Activated naive CD4-positive, alpha-beta T cell treated with anti-CD3 and anti-CD28 coated beads for 36 hours (primary cell): ENCODE measurements at regions of chr15 and their contacts with region 1.

Region 1: GRCh38 chr15:72473614-72474465 is at the start of gene ARIH1:
- DNase-seq: peak; percentile 94
- H3K4me3 Mint-ChIP-seq: peak within 1 kb of the TSS; percentile 98
- H3K27ac Mint-ChIP-seq: peak within 1 kb of the TSS; percentile 98
- H3K4me1 Mint-ChIP-seq: peaks cover 34% of the 10 kb centered on the region
- H3K27me3 Mint-ChIP-seq: no peaks in the 10 kb centered on the region
- total RNA-seq, gene ARIH1: 174 to 183 TPM

Region 2: GRCh38 chr15:72117486-72118399 is 356.1 kb before region 1 on chr15 and contains the start of gene MYO9A:
- CTCF ChIA-PET with region 1: no interaction called
- intact Hi-C with region 1: loop called (anchors 1 kb)
- DNase-seq: peak; percentile 99
- H3K4me3 Mint-ChIP-seq: peak within 1 kb of the TSS; percentile 95
- H3K27ac Mint-ChIP-seq: peak within 1 kb of the TSS; percentile 97
- H3K4me1 Mint-ChIP-seq: peaks cover 31% of the 10 kb centered on the region
- H3K27me3 Mint-ChIP-seq: no peaks in the 10 kb centered on the region
- total RNA-seq, gene MYO9A: 9.5 to 10.0 TPM

Region 3: DNA sequence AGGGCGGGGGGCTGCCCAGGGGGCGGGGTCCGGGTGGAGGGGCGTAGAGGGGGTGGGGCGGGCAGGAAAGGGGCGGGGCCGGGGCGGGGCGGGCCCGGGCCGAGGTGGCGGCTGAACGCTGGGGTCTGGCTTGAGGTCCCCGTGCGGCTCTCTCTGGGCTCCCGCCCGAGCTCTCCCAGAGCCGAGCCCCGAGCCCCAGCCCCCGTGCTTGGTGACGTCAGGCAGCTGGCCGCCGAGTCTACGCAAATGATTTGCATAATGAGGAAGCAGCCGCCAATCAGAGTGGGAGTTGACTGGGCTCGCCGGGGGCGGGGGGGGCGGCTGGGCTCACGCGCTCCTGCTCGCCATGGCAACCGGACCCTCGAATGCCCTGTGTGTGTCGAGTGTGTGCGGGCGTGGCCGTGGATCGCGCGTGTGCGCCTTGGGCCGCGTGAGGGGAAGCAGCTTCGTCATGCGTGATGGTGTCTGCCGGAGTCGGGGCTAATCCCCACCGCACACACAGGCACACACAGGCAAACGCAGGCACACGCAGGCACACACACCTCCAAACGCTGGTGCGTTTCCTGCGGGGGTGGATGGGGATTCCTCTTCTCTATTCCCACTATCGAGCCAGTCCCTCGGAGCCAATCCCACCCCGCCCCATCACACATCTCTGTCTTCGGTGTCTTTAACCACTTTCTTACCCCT is 153.7 kb before region 1 on chr15 and contains the start of gene CELF6:
- CTCF ChIA-PET with region 1: no interaction called
- intact Hi-C with region 1: loop called (anchors 5 kb)
- DNase-seq: peak; percentile 75
- H3K4me3 Mint-ChIP-seq: peak within 1 kb of the TSS; percentile 78
- H3K27ac Mint-ChIP-seq: no peak within 1 kb of the TSS
- H3K4me1 Mint-ChIP-seq: peaks cover 19% of the 10 kb centered on the region
- H3K27me3 Mint-ChIP-seq: peaks cover 8% of the 10 kb centered on the region
- total RNA-seq, gene CELF6: 0.22 TPM in 1 of 2 experiments, not detected in the other

Region 4: GRCh38 chr15:72411544-72411943 is 62.3 kb before region 1 on chr15:
- CTCF ChIA-PET with region 1: no interaction called
- intact Hi-C with region 1: no loop called
- DNase-seq: no peak
- H3K4me3 Mint-ChIP-seq: no peak overlapping the region
- H3K27ac Mint-ChIP-seq: no peak overlapping the region
- H3K4me1 Mint-ChIP-seq: no peaks in the 10 kb centered on the region
- H3K27me3 Mint-ChIP-seq: peaks cover 2% of the 10 kb centered on the region

Region 5: GRCh38 chr15:72511536-72511935 is 37.7 kb after region 1 on chr15:
- CTCF ChIA-PET with region 1: interaction called, 3 read pairs
- intact Hi-C with region 1: loop called (anchors 5 kb)
- DNase-seq: no peak
- H3K4me3 Mint-ChIP-seq: no peak overlapping the region
- H3K27ac Mint-ChIP-seq: no peak overlapping the region
- H3K4me1 Mint-ChIP-seq: peaks cover 62% of the 10 kb centered on the region
- H3K27me3 Mint-ChIP-seq: no peaks in the 10 kb centered on the region

Region 6: GRCh38 chr15:72521682-72522081 is 47.8 kb after region 1 on chr15:
- CTCF ChIA-PET with region 1: no interaction called
- intact Hi-C with region 1: no loop called
- DNase-seq: peak; percentile 32
- H3K4me3 Mint-ChIP-seq: no peak overlapping the region
- H3K27ac Mint-ChIP-seq: no peak overlapping the region
- H3K4me1 Mint-ChIP-seq: peaks cover 15% of the 10 kb centered on the region
- H3K27me3 Mint-ChIP-seq: no peaks in the 10 kb centered on the region

Region 7: DNA sequence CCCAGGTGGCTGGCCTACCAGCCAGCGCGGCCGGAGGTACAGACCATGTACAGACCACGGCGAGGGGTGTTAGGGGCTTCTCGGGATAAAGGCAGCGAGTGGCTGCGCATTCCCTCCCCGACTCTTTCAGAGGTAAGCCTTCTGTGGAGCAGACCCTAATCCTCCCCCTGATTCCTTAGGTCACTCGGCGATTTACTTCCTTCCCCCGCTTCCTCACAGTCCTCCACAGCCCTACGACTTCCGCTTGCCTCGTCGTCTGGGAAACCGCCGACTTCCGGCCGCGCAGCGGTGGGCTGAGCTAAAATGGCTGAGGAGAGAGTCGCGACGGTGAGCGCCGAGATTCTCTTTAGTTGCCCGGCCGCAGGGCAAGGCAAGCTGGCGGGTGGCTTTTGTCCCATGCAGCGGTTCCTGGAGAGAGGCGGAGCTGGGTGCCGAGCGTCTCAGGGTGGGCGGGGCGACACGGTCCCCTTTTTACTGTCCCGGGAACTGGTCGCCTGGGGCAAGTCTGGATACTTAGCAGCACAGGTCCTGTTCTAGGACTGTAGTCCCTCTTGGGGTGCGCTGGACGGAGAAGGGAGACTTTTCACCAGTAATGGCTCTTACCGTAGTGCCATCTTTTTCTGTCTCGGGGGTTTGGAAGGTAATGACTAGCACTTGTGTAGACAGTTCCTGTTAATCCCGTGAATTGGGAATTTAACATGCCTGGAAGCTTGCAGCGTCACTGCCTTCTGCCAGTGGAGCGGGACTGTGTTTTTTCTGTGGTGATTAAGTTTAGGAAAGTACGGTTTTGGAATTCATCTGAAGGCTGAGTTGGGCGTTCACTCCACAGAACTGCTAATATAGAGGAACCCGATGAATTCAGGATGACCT is 212.3 kb after region 1 on chr15 and contains the starts of genes BBS4 and HIGD2B:
- CTCF ChIA-PET with region 1: no interaction called
- intact Hi-C with region 1: loop called (anchors 2 kb)
- DNase-seq: peak; percentile 91
- H3K4me3 Mint-ChIP-seq: peak within 1 kb of the TSS; percentile 89
- H3K27ac Mint-ChIP-seq: peak within 1 kb of the TSS; percentile 87
- H3K4me1 Mint-ChIP-seq: peaks cover 15% of the 10 kb centered on the region
- H3K27me3 Mint-ChIP-seq: no peaks in the 10 kb centered on the region
- total RNA-seq, gene BBS4: 16.3 to 17.4 TPM
- total RNA-seq, gene HIGD2B: 0.19 to 0.27 TPM